Mammary epithelial cell (primary cell): ENCODE measurements at regions of chr6 and their contacts with region 1.

Region 1: GRCh38 chr6:20386218-20386617 is 15.5 kb upstream of the E2F3 start:
- DNase-seq: no peak
- H3K4me3 ChIP-seq: no peak overlapping the region
- H3K27ac ChIP-seq: no peak overlapping the region
- H3K4me1 ChIP-seq: no peaks in the 10 kb centered on the region
- H3K27me3 ChIP-seq: no peaks in the 10 kb centered on the region
- CTCF ChIP-seq: no peak

Region 2: GRCh38 chr6:20312606-20313005 is 73.6 kb before region 1 on chr6:
- CTCF ChIA-PET with region 1: no interaction called
- dilution Hi-C with region 1: loop called (anchors 5 kb)
- in situ Hi-C with region 1: no loop called
- intact Hi-C with region 1: no loop called
- DNase-seq: no peak
- H3K4me3 ChIP-seq: no peak overlapping the region
- H3K27ac ChIP-seq: no peak overlapping the region
- H3K4me1 ChIP-seq: no peaks in the 10 kb centered on the region
- H3K27me3 ChIP-seq: no peaks in the 10 kb centered on the region
- CTCF ChIP-seq: no peak